ENCODE measurements at regions of chr11 and their contacts with region 1.

Region 1: DNA sequence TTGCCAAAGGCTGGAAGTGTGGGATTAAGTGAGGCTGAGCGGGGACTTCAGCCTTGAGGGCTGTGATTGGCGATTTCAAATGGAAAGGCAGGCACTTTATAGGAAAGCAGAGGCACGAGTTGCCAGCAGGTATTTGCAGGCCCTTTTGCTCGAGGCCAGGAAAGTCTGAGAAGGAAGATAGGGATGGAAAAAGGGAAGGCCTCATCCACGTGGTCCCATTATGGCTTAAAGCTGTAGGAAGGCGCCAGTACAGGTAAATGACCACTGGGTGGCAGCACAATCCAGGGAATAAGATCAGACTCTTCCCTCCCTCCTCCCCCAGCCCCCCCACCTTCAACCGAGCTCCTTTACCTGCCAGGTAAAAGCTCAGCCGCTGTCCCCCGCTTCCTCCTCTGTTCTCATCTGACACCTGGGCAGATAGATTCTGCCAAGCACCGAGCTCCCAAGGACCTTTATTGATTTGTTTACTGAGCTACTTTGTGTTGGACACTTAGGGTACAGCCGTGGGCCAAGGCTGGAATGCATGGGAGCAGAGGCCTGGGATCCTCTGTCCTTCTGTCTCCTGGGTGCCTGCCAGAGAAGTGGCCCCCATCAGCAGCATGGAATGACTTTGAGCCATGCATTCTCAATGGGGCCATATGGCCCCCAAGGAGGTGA is 7.5 kb downstream of the P2RX3 start:
- DNase-seq: peak; percentile 67 to 91 (median 80)
- H3K4me3 ChIP-seq: no peak overlapping the region
- H3K27ac ChIP-seq: no peak overlapping the region
- H3K4me1 ChIP-seq: no peaks in the 10 kb centered on the region
- H3K27me3 ChIP-seq: no peaks in the 10 kb centered on the region
- CTCF ChIP-seq: peak; percentile 50 to 85 (median 74)
- POLR2A ChIP-seq: no peak

Region 2: DNA sequence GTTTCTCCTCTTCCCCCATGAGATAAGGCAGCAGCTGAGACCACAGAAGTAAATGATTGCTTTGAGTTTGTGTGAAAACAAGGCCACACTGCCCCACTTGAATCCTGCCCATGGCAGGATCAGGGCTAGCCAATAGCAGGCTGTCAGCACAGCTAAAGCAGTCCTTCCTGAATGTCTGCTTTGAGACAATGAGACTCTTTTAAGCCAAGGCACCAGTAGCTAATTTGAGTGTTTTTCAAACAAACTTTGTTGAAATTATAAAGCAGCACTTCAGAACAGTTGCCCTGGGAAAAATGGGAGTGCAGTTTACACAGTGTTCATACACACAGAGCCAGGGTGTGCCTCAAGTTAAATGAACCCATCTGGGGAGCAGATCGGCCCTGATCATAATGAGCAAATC is 460.5 kb before region 1 on chr11:
- intact Hi-C with region 1: no loop called
- DNase-seq: no peak
- H3K4me3 ChIP-seq: no peak overlapping the region
- H3K27ac ChIP-seq: no peak overlapping the region
- H3K4me1 ChIP-seq: no peaks in the 10 kb centered on the region
- H3K27me3 ChIP-seq: no peaks in the 10 kb centered on the region
- CTCF ChIP-seq: no peak
- POLR2A ChIP-seq: no peak

Region 3: GRCh38 chr11:57203359-57203758 is 142.3 kb before region 1 on chr11:
- intact Hi-C with region 1: no loop called
- DNase-seq: peak; percentile 43 to 89 (median 73)
- H3K4me3 ChIP-seq: no peak overlapping the region
- H3K27ac ChIP-seq: no peak overlapping the region
- H3K4me1 ChIP-seq: no peaks in the 10 kb centered on the region
- H3K27me3 ChIP-seq: no peaks in the 10 kb centered on the region
- CTCF ChIP-seq: no peak
- POLR2A ChIP-seq: no peak

Region 4: DNA sequence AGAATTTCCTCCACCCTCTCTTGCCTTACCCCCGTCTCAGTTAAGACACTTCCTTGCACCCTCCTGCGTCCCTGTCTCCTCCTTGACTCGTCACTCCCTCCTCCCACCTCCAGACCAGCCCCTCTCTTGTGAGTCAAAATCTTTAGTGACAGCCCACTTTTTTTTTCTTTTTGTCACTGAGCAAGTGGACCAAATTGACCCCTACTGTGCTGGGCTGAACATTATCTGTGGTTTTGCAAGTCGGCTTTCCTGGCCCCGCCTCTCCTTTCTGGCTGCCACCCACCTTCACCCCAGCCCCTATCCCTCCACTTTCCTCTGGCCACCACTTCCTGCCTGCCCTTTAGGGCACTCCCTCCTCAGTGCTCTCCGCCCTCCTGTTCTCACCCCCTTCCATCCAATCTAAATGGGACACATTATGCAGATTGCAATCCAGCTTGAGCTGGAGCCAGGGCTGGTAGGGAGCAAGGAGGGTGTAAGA is 108.4 kb before region 1 on chr11 and contains the start of gene APLNR:
- intact Hi-C with region 1: no loop called
- DNase-seq: no peak
- H3K4me3 ChIP-seq: no peak within 1 kb of the TSS
- H3K27ac ChIP-seq: peak within 1 kb of the TSS in 1 of 5 donors; percentile 40
- H3K4me1 ChIP-seq: no peaks in the 10 kb centered on the region
- H3K27me3 ChIP-seq: peaks cover 8% of the 10 kb centered on the region
- CTCF ChIP-seq: no peak
- POLR2A ChIP-seq: no peak
- total RNA-seq, gene APLNR: 3.4 to 30.1 (median 6.9) TPM

Region 5: GRCh38 chr11:57456960-57457642 is 111.4 kb after region 1 on chr11:
- intact Hi-C with region 1: loop called in 1 of 2 experiments (anchors 10 kb)
- DNase-seq: peak; percentile 88 to 96 (median 92)
- H3K4me3 ChIP-seq: no peak overlapping the region
- H3K27ac ChIP-seq: no peak overlapping the region
- H3K4me1 ChIP-seq: peaks cover 19 to 32% of the 10 kb centered on the region in 2 donors
- H3K27me3 ChIP-seq: peaks cover 26% of the 10 kb centered on the region
- CTCF ChIP-seq: peak; percentile 91 to 100 (median 96)
- POLR2A ChIP-seq: no peak

Region 6: GRCh38 chr11:57480409-57481137 is 134.9 kb after region 1 on chr11:
- intact Hi-C with region 1: loop called (anchors 10 kb)
- DNase-seq: peak; percentile 54 to 78 (median 66)
- H3K4me3 ChIP-seq: no peak overlapping the region
- H3K27ac ChIP-seq: no peak overlapping the region
- H3K4me1 ChIP-seq: peaks cover 18 to 26% of the 10 kb centered on the region in 2 donors
- H3K27me3 ChIP-seq: no peaks in the 10 kb centered on the region
- CTCF ChIP-seq: peak; percentile 49 to 72 (median 56)
- POLR2A ChIP-seq: no peak